Heart right ventricle (tissue), 16 donors: ENCODE measurements at regions of chr2 and their contacts with region 1.

Region 1: DNA sequence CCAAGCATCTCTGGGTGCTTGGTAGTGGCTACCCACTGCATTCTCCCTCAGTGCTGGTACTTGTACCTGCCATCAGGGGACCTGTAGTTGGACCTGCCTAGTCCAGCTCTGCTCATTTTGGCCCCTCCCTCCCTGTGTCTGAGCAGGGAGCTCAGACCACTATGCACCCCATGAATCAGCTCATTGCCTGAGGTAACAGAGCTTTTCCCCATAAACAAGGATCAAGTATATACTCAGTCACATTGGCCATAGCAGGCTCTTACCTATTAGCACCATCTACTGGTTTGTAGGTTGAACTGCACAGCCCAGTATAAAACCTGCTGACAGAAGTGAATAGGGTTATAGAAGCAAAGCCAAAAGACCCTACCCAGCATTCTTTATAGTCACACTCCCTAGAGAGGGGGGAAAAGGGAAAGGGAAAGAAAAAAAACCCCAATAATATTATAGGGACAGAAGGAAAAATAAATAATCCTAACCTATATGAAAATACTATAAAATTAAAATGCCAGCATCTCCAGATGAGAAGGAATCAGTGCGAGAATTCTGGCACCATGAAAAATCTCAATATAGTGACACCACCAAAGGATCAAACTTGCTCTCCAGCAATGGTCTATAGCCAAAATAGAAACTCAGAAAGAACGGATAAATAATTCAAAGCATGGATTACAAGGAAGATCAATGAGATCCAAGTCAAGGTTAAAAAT is 6.9 kb upstream of the FLACC1 start:
- DNase-seq: no peak
- ATAC-seq: peak; percentile 44 to 77 (median 68)
- H3K4me3 ChIP-seq: no peak overlapping the region
- H3K27ac ChIP-seq: peak overlapping the region in 1 of 10 donors; percentile 1
- H3K4me1 ChIP-seq: peaks cover 0 to 13% (median 3%) of the 10 kb centered on the region in 9 donors
- H3K27me3 ChIP-seq: no peaks in the 10 kb centered on the region
- CTCF ChIP-seq: peak; percentile 58 to 87 (median 78)

Region 2: GRCh38 chr2:200252265-200253067 is 1111.5 kb before region 1 on chr2:
- intact Hi-C with region 1: no loop called
- DNase-seq: peak in 1 of 2 donors; percentile 29
- ATAC-seq: peak in 7 of 8 donors; percentile 47 to 74 (median 69)
- H3K4me3 ChIP-seq: peak overlapping the region in 1 of 10 donors; percentile 10
- H3K27ac ChIP-seq: peak overlapping the region in 4 of 10 donors; percentile 7 to 44 (median 20)
- H3K4me1 ChIP-seq: peaks cover 0 to 23% (median 11%) of the 10 kb centered on the region in 9 donors
- H3K27me3 ChIP-seq: no peaks in the 10 kb centered on the region
- CTCF ChIP-seq: no peak

Region 3: DNA sequence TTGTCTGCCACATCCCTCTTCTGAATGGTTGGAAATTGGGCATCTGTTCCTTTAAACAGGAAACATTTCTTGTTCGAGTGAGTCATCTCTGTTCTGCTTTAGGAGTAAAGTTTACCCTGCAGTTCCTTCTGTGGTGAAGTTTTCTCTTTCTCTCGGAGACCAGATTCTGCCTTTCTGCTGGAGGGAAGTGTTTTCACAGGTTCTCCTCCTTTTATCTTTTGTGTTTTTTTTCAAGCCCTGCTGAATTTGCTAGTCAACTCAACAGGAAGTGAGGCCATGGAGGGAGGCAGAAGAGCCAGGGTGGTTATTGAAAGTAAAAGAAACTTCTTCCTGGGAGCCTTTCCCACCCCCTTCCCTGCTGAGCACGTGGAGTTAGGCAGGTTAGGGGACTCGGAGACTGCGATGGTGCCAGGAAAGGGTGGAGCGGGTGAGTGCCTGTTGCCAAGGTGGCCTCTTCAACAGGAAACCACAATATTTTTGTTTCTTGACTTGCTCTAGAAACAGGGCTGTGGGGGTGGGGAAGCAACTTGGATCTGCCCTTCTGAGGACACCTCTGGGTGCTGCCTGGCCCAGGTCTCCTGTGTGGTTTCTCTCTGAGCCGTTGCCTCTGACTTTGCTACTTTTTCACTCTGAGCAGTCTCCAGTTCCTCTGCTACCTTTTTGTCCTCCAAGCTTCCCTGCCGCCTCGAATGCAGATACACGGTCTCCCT is 105.9 kb before region 1 on chr2:
- intact Hi-C with region 1: loop called in 2 of 10 experiments (anchors 5 to 10 kb)
- DNase-seq: peak; percentile 46 to 77
- ATAC-seq: peak; percentile 72 to 87 (median 79)
- H3K4me3 ChIP-seq: peak overlapping the region; percentile 39 to 71 (median 66)
- H3K27ac ChIP-seq: peak overlapping the region; percentile 38 to 95 (median 86)
- H3K4me1 ChIP-seq: peaks cover 2 to 78% (median 12%) of the 10 kb centered on the region in 9 donors
- H3K27me3 ChIP-seq: no peaks in the 10 kb centered on the region
- CTCF ChIP-seq: no peak